Heart left ventricle (tissue), 16 donors: ENCODE measurements at regions of chr20 and their contacts with region 1.

Region 1: DNA sequence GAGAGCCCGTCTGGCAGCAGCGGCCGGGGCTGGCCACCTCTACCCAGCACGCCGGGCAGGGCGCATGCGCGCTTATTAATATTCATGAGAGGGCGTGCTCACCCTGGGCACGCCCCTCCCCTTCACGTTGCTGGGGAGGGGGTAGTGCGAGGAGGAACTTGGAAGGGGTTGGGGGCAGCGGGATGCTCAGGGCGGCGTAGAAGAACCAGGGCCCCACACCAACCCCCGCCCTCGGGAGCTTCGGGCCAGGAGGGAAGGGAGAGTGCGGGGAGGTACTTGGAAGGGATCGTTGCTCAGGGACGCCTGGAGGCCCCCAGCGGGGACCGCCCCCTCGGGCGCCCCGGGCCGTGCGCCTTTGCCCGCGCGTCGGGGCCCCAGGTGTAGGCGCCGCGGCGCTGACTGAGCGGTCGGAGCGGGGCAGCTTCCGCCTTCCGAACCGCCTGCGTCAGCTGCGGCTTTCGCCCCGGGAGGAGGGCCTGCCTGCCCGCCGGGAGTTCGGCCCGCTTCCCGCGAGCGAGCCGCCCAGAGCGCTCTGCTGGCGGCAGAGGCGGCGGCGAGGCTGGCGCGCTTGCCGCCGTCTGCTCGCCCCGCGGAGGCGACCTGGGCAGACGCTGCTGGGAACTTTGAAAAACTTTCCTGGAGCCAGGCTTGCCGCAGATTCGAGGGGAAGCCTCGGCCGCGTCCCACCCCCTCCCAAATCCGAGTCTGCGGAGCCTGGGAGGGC is at the start of gene JAG1:
- DNase-seq: peak; percentile 94 to 98 (median 96)
- ATAC-seq: peak; percentile 88 to 90 (median 89)
- H3K4me3 ChIP-seq: peak within 1 kb of the TSS; percentile 73 to 98 (median 91)
- H3K27ac ChIP-seq: peak within 1 kb of the TSS; percentile 91 to 99 (median 98)
- H3K4me1 ChIP-seq: peaks cover 0 to 27% (median 12%) of the 10 kb centered on the region in 12 donors
- H3K27me3 ChIP-seq: no peaks in the 10 kb centered on the region
- CTCF ChIP-seq: no peak
- POLR2A ChIP-seq: peak; percentile 28 to 59
- total RNA-seq, gene JAG1: 20.9 to 42.6 (median 29.6) TPM

Region 2: GRCh38 chr20:10476319-10476724 is 197.8 kb before region 1 on chr20:
- intact Hi-C with region 1: loop called in 3 of 10 experiments (anchors 5 to 10 kb)
- DNase-seq: no peak
- ATAC-seq: peak in 3 of 4 donors; percentile 22 to 57 (median 52)
- H3K4me3 ChIP-seq: no peak overlapping the region
- H3K27ac ChIP-seq: peak overlapping the region in 1 of 12 donors; percentile 67
- H3K4me1 ChIP-seq: peaks cover 0 to 40% (median 12%) of the 10 kb centered on the region in 12 donors
- H3K27me3 ChIP-seq: no peaks in the 10 kb centered on the region
- CTCF ChIP-seq: no peak
- POLR2A ChIP-seq: no peak

Region 3: GRCh38 chr20:10654630-10655029 is 19.5 kb before region 1 on chr20:
- intact Hi-C with region 1: loop called in 1 of 10 experiments (anchors 2 kb)
- DNase-seq: no peak
- ATAC-seq: peak; percentile 27 to 29 (median 28)
- H3K4me3 ChIP-seq: peak overlapping the region in 1 of 12 donors; percentile 9
- H3K27ac ChIP-seq: peak overlapping the region in 11 of 12 donors; percentile 54 to 80 (median 65)
- H3K4me1 ChIP-seq: peaks cover 11 to 99% (median 77%) of the 10 kb centered on the region in 12 donors
- H3K27me3 ChIP-seq: no peaks in the 10 kb centered on the region
- CTCF ChIP-seq: no peak
- POLR2A ChIP-seq: no peak

Region 4: GRCh38 chr20:10708351-10709185 is 34.4 kb after region 1 on chr20:
- intact Hi-C with region 1: no loop called
- DNase-seq: no peak
- ATAC-seq: no peak
- H3K4me3 ChIP-seq: no peak overlapping the region
- H3K27ac ChIP-seq: no peak overlapping the region
- H3K4me1 ChIP-seq: peaks cover 0 to 6% (median 0%) of the 10 kb centered on the region in 12 donors
- H3K27me3 ChIP-seq: no peaks in the 10 kb centered on the region
- CTCF ChIP-seq: no peak
- POLR2A ChIP-seq: no peak

Region 5: DNA sequence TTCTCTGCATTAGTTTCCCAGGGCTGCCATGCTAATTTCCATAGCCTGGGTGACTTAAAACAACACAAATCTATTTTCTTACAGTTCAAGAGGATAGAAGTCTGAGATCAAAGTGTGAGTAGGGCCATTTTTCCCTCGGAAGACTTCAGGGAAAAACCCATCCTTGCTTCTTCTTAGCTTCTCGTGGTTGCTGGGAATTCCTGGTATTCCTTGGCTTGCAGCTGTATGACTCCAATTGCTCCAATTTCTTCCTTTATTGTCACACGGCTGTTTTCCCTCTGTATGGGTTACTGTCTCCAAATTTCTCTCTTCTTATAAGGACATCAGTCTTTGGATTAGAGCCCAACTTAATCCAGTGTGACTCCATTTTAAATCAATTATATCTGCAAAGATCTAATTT is 128.1 kb after region 1 on chr20:
- intact Hi-C with region 1: loop called in 1 of 10 experiments (anchors 1 kb)
- DNase-seq: no peak
- ATAC-seq: no peak
- H3K4me3 ChIP-seq: no peak overlapping the region
- H3K27ac ChIP-seq: no peak overlapping the region
- H3K4me1 ChIP-seq: peaks cover 0 to 23% (median 10%) of the 10 kb centered on the region in 12 donors
- H3K27me3 ChIP-seq: no peaks in the 10 kb centered on the region
- CTCF ChIP-seq: no peak
- POLR2A ChIP-seq: no peak

Region 6: DNA sequence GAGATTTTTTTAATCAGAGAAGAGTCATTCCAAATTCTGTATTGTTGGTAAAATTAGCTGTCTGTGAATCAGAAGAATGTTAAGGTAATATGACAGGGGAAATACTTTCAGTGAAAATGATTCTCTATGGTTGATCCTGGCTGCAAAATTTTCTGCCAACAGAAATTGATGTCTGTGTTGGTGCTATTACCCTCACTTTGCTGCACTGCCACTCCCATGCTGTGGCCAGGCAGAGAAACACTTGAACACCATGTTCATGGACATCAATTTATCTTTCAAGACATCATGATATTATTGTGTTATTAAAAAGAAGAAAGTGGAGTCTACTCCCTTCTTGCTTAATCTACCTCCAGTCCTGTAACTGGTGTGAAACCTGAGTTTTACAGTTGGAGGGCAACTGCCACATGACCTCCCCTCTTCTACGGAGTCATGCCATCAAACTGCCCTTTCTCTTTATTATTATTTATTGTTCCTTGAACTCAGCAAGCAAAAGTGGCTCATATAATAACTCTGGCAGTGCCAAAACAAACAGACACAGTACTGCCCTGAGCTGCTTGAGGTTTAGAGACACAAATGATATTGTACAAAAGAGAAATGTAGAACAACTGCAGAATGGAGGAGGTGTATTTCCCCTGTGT is 287.6 kb after region 1 on chr20:
- intact Hi-C with region 1: loop called in 4 of 10 experiments (anchors 5 to 10 kb)
- DNase-seq: no peak
- ATAC-seq: no peak
- H3K4me3 ChIP-seq: no peak overlapping the region
- H3K27ac ChIP-seq: no peak overlapping the region
- H3K4me1 ChIP-seq: peaks cover 0 to 37% (median 12%) of the 10 kb centered on the region in 12 donors
- H3K27me3 ChIP-seq: no peaks in the 10 kb centered on the region
- CTCF ChIP-seq: no peak
- POLR2A ChIP-seq: no peak

Region 7: DNA sequence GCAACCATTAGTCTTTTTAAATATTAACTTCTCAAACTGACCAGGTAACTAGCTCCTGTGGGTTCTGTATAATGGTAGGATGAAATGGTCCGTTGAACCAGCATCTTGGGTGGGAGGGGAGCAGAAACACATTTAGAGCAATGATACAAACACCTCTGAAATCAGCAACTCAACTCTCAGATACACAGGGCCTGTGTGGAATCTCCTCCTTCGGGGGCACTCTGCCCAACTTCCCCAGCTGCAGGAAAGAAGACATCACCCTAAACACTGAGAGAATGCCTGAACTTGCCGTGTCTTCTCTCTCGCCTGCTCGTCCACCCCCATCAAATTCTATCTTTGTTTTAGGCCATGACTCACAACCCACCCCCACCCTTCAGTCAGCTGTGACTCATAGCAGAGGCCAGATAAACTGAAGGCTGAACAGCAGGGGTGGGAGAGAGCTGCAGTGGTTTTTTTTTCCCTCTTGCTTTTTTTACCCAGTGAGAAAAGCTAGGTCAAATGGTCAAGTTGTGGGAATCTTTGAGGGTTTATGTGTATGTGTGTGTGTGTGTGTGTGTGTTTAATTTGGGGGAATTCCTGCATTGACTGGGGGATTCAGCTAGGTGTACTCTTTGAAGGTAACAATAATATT is 593.1 kb after region 1 on chr20:
- intact Hi-C with region 1: loop called in 8 of 10 experiments (anchors 2 to 10 kb)
- DNase-seq: peak in 4 of 5 donors; percentile 52 to 68 (median 64)
- ATAC-seq: peak; percentile 83 to 98 (median 94)
- H3K4me3 ChIP-seq: no peak overlapping the region
- H3K27ac ChIP-seq: peak overlapping the region in 11 of 12 donors; percentile 7 to 68 (median 37)
- H3K4me1 ChIP-seq: peaks cover 0 to 23% (median 17%) of the 10 kb centered on the region in 12 donors
- H3K27me3 ChIP-seq: no peaks in the 10 kb centered on the region
- CTCF ChIP-seq: peak in 1 of 12 donors; percentile 18
- POLR2A ChIP-seq: no peak